CD8-positive, alpha-beta memory T cell (primary cell): ENCODE measurements at regions of chr20 and their contacts with region 1.

Region 1: DNA sequence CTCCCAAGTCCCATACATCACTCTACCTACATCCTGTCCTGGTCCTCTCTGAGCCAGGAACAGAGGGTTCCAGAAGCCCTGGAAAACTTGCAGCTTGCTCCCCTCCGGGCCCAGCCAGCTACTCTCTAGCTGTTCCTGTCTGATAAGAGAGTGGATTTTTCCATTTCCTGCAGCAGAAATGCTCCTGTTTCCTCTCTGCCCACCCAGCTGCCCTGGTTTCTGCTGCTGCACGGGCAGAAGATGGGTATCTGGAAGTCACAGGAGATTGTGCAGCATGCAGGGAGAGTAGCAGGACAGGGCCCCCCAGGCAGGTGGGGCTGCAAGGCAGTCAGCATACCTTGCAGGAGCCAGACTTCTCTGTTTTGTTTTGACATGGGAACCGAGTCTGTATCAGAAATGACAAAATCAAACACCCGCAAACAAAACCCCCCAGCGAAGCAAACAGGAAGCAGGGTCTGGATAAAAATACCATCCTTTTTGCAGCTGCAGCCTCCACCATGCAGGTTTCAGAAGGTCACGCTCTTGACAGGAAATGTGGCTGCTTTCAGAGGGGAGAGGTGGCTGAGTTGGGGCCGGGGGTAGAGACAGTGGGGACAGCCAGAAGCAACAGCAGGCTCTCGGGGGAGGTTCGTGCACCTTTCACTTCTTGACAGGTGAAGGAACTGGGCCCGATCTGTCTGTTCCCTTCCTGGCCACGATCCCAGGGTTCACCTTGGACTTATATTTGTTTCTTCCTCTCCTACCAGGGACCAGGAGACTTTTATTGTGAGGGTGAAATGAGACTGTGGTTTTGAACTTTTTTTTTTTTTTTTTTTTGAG is 50.8 kb upstream of the FAM83D start:
- DNase-seq: peak; percentile 65 to 90 (median 76)
- H3K4me3 ChIP-seq: peak overlapping the region; percentile 61
- H3K4me3 Mint-ChIP-seq: peak overlapping the region; percentile 78 to 93 (median 88)
- H3K27ac ChIP-seq: peak overlapping the region; percentile 85
- H3K27ac Mint-ChIP-seq: peak overlapping the region; percentile 97 to 100 (median 100)
- H3K4me1 ChIP-seq: peaks cover 65% of the 10 kb centered on the region
- H3K4me1 Mint-ChIP-seq: peaks cover 83 to 100% (median 99%) of the 10 kb centered on the region in 3 donors
- H3K27me3 ChIP-seq: no peaks in the 10 kb centered on the region
- H3K27me3 Mint-ChIP-seq: no peaks in the 10 kb centered on the region

Region 2: GRCh38 chr20:38782275-38782674 is 93.1 kb before region 1 on chr20:
- CTCF ChIA-PET with region 1: no interaction called
- POLR2A ChIA-PET with region 1: no interaction called
- DNase-seq: no peak
- H3K4me3 ChIP-seq: no peak overlapping the region
- H3K4me3 Mint-ChIP-seq: no peak overlapping the region
- H3K27ac ChIP-seq: no peak overlapping the region
- H3K27ac Mint-ChIP-seq: peak overlapping the region in 3 of 8 donors; percentile 5 to 68 (median 51)
- H3K4me1 ChIP-seq: no peaks in the 10 kb centered on the region
- H3K4me1 Mint-ChIP-seq: peaks cover 0 to 6% (median 0%) of the 10 kb centered on the region in 3 donors
- H3K27me3 ChIP-seq: no peaks in the 10 kb centered on the region
- H3K27me3 Mint-ChIP-seq: no peaks in the 10 kb centered on the region

Region 3: DNA sequence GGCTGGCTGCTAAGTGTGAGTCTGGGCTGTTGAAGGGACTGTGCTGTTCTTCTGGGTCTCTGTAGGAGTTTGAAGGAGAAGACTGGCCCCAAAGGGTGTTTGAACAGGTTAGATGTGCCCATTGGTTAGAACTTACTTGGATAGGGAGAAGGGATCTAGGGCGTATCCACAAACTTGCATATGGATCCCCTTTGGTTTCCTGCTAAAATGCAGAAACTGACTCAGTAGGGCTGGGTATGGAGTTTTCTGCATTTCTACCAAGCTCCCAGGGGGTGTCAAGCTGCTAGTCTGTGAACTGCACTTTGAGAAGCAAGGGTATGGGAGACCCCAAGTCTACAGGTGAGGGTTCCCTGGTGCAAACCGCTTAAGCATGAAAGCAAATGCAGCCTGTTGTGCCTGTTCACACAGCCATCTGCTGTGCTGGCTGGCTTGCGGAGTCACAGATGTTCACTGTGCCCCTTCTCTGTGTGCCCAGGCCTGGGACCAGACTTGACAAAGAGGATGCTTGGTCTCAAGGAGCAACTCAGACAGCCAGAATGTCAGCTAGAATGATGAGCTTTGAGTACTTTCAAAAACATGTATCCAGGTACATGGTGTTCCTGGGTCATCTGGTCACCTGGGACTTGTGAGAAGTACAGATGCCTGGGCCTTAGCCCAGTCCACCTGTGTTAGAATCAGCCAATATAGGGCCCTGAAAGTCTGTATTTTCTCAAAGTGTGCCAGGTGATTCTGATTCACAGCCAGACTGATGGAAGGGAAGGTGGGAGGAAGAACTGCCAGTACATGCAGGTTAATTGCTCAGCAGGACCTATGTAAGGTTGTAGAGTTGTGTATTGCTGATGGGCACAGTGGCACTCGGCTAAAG is 62.4 kb before region 1 on chr20:
- CTCF ChIA-PET with region 1: interaction called, 66 read pairs
- POLR2A ChIA-PET with region 1: interaction called, 80 read pairs
- DNase-seq: no peak
- H3K4me3 ChIP-seq: no peak overlapping the region
- H3K4me3 Mint-ChIP-seq: peak overlapping the region in 2 of 7 donors; percentile 35 to 37
- H3K27ac ChIP-seq: no peak overlapping the region
- H3K27ac Mint-ChIP-seq: peak overlapping the region in 7 of 8 donors; percentile 9 to 93 (median 70)
- H3K4me1 ChIP-seq: peaks cover 58% of the 10 kb centered on the region
- H3K4me1 Mint-ChIP-seq: peaks cover 81 to 98% (median 95%) of the 10 kb centered on the region in 3 donors
- H3K27me3 ChIP-seq: no peaks in the 10 kb centered on the region
- H3K27me3 Mint-ChIP-seq: no peaks in the 10 kb centered on the region

Region 4: DNA sequence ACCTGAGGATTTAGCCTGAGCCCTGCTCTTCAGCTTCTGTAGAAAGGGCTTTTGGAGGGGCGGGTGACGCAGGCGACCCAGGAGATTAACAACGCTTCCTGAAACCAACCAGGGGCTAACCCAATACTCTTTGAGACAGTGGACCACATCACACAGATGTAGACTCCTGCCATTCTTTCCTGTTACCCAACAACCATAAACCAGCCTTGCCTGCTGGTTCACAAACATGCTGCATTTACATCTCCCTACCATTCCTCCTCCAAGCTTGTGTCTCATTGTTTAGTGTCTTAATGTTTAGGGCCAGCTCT is 41.6 kb before region 1 on chr20:
- CTCF ChIA-PET with region 1: interaction called, 11 read pairs
- POLR2A ChIA-PET with region 1: interaction called, 70 read pairs
- DNase-seq: peak in 2 of 5 donors; percentile 56 to 65
- H3K4me3 ChIP-seq: no peak overlapping the region
- H3K4me3 Mint-ChIP-seq: peak overlapping the region; percentile 22 to 61 (median 54)
- H3K27ac ChIP-seq: no peak overlapping the region
- H3K27ac Mint-ChIP-seq: peak overlapping the region; percentile 69 to 98 (median 84)
- H3K4me1 ChIP-seq: peaks cover 36% of the 10 kb centered on the region
- H3K4me1 Mint-ChIP-seq: peaks cover 49 to 85% (median 64%) of the 10 kb centered on the region in 3 donors
- H3K27me3 ChIP-seq: no peaks in the 10 kb centered on the region
- H3K27me3 Mint-ChIP-seq: no peaks in the 10 kb centered on the region

Region 5: DNA sequence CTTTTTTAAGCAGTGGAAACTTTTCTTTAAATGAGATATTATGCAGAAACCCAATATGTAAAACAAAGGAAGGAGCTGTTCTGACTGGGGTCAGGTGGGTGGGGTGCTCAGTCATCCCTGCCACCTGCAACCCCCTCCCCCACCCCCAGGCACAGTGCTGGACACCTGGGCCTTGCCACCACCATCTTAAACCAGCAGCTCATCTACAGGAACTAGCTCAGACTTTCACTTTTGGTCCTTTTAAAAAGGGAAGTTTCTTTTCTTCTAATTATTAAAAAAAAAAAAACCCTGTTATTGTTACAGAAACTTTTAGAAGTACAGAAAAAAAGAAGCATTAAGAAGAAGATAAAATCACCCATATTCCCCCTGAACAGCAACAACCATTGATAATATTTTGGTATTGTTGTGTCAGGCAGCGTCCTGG is 32.8 kb before region 1 on chr20:
- CTCF ChIA-PET with region 1: interaction called, 16 read pairs
- POLR2A ChIA-PET with region 1: interaction called, 70 read pairs
- DNase-seq: peak in 2 of 5 donors; percentile 45 to 65
- H3K4me3 ChIP-seq: peak overlapping the region; percentile 48
- H3K4me3 Mint-ChIP-seq: peak overlapping the region; percentile 15 to 92 (median 74)
- H3K27ac ChIP-seq: peak overlapping the region; percentile 89
- H3K27ac Mint-ChIP-seq: peak overlapping the region; percentile 93 to 100 (median 98)
- H3K4me1 ChIP-seq: peaks cover 69% of the 10 kb centered on the region
- H3K4me1 Mint-ChIP-seq: peaks cover 77 to 98% (median 86%) of the 10 kb centered on the region in 3 donors
- H3K27me3 ChIP-seq: no peaks in the 10 kb centered on the region
- H3K27me3 Mint-ChIP-seq: peaks cover 0 to 3% of the 10 kb centered on the region in 2 donors

Region 6: DNA sequence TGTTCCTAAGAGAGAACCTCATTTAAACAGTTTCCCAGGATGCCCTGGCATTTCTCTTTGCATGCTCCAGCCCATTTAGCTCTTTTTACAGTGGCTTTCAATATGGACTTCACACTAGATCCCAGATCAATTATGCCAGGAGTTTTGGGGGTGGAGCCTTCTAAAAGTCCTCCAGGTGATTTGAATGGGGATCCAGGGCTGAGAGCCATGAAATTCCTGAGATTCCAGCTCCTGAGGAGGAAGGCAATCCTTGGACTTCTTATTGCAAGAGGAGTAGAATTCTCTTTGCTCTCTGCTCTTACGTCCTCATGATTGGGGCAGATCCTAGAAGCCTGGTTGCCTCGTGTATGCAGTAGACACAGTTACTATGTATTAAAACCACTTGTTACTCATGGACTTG is 271.0 kb after region 1 on chr20:
- CTCF ChIA-PET with region 1: no interaction called
- POLR2A ChIA-PET with region 1: no interaction called
- DNase-seq: no peak
- H3K4me3 ChIP-seq: no peak overlapping the region
- H3K4me3 Mint-ChIP-seq: no peak overlapping the region
- H3K27ac ChIP-seq: no peak overlapping the region
- H3K27ac Mint-ChIP-seq: no peak overlapping the region
- H3K4me1 ChIP-seq: no peaks in the 10 kb centered on the region
- H3K4me1 Mint-ChIP-seq: no peaks in the 10 kb centered on the region
- H3K27me3 ChIP-seq: no peaks in the 10 kb centered on the region
- H3K27me3 Mint-ChIP-seq: peaks cover 11 to 12% of the 10 kb centered on the region in 2 donors